Transverse colon (tissue), 4 donors: ENCODE measurements at regions of chr1 and their contacts with region 1.

Region 1: GRCh38 chr1:66393586-66394287 is 140.2 kb upstream of the SGIP1 start:
- DNase-seq: no peak
- H3K4me3 ChIP-seq: no peak overlapping the region
- H3K27ac ChIP-seq: no peak overlapping the region
- H3K4me1 ChIP-seq: peaks cover 0 to 12% (median 0%) of the 10 kb centered on the region in 4 donors
- H3K27me3 ChIP-seq: no peaks in the 10 kb centered on the region
- CTCF ChIP-seq: no peak
- EP300 ChIP-seq: no peak
- POLR2A ChIP-seq: no peak

Region 2: GRCh38 chr1:66436378-66437145 is 42.8 kb after region 1 on chr1:
- in situ Hi-C with region 1: no loop called
- intact Hi-C with region 1: loop called (anchors 5 kb)
- DNase-seq: no peak
- H3K4me3 ChIP-seq: no peak overlapping the region
- H3K27ac ChIP-seq: no peak overlapping the region
- H3K4me1 ChIP-seq: peaks cover 0 to 9% (median 0%) of the 10 kb centered on the region in 4 donors
- H3K27me3 ChIP-seq: no peaks in the 10 kb centered on the region
- CTCF ChIP-seq: peak in 1 of 5 experiments; percentile 8
- EP300 ChIP-seq: no peak
- POLR2A ChIP-seq: no peak